ENCODE measurements at regions of chr9 and their contacts with region 1.

Region 1: GRCh38 chr9:76393963-76394679 is at the start of gene RFK:
- H3K4me3 ChIP-seq: peak within 1 kb of the TSS; percentile 88
- H3K27ac ChIP-seq: peak within 1 kb of the TSS; percentile 98
- H3K4me1 ChIP-seq: no peaks in the 10 kb centered on the region
- CTCF ChIP-seq: peak; percentile 87

Region 2: GRCh38 chr9:76269818-76270217 is 124.3 kb before region 1 on chr9:
- CTCF ChIA-PET with region 1: no interaction called
- POLR2A ChIA-PET with region 1: no interaction called
- H3K4me3 ChIP-seq: no peak overlapping the region
- H3K27ac ChIP-seq: no peak overlapping the region
- H3K4me1 ChIP-seq: peaks cover 19% of the 10 kb centered on the region
- CTCF ChIP-seq: no peak

Region 3: DNA sequence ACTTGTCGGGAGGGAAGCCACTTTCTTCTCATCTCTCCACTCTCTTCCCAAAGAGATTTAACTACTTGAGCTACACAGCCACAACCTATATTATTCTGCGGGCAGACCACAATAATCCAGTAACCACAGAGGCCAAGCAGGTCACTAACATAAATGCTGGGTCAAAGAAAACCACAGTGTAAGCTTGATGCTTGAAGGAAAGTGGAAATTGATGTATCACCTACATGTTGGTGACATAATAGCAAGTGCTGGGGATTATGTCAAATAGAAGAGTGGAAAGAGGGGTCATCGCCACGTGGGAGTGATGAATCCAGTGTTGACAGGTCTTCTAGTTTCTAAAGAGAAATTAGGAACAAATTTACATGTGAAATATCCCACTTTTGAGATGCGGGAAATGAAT is 40.8 kb before region 1 on chr9:
- CTCF ChIA-PET with region 1: interaction called, 4 read pairs
- POLR2A ChIA-PET with region 1: interaction called, 11 read pairs
- H3K4me3 ChIP-seq: no peak overlapping the region
- H3K27ac ChIP-seq: no peak overlapping the region
- H3K4me1 ChIP-seq: no peaks in the 10 kb centered on the region
- CTCF ChIP-seq: no peak

Region 4: GRCh38 chr9:76369583-76369982 is 24.5 kb before region 1 on chr9:
- CTCF ChIA-PET with region 1: interaction called, 11 read pairs
- POLR2A ChIA-PET with region 1: interaction called, 40 read pairs
- H3K4me3 ChIP-seq: no peak overlapping the region
- H3K27ac ChIP-seq: peak overlapping the region; percentile 59
- H3K4me1 ChIP-seq: peaks cover 28% of the 10 kb centered on the region
- CTCF ChIP-seq: no peak

Region 5: GRCh38 chr9:76419782-76420380 is 25.8 kb after region 1 on chr9:
- CTCF ChIA-PET with region 1: interaction called, 16 read pairs
- POLR2A ChIA-PET with region 1: interaction called, 4 read pairs
- H3K4me3 ChIP-seq: no peak overlapping the region
- H3K27ac ChIP-seq: no peak overlapping the region
- H3K4me1 ChIP-seq: no peaks in the 10 kb centered on the region
- CTCF ChIP-seq: no peak

Region 6: DNA sequence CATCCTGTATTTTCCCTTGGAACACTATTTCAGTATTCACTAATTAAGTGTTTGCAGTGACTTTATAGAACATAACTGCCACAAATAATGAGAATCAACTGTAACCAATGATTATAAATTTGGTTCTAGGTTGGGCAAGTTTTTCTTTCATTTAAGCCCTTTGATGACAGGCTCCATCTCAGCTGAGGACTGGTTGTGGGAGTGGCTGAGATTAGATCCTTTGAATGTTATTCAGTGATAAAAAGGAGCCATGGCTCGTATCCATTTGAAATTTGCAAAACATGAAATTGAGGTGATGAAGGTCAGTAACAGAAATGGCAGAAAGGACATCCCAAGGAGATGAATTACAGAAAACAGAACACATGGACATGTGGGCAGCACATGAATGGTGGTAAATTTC is 232.0 kb after region 1 on chr9:
- CTCF ChIA-PET with region 1: no interaction called
- POLR2A ChIA-PET with region 1: no interaction called
- H3K4me3 ChIP-seq: no peak overlapping the region
- H3K27ac ChIP-seq: no peak overlapping the region
- H3K4me1 ChIP-seq: no peaks in the 10 kb centered on the region
- CTCF ChIP-seq: no peak

Region 7: GRCh38 chr9:76926324-76926731 is 532.2 kb after region 1 on chr9:
- CTCF ChIA-PET with region 1: no interaction called
- POLR2A ChIA-PET with region 1: interaction called, 10 read pairs
- H3K4me3 ChIP-seq: no peak overlapping the region
- H3K27ac ChIP-seq: no peak overlapping the region
- H3K4me1 ChIP-seq: no peaks in the 10 kb centered on the region
- CTCF ChIP-seq: no peak

Measured in HEK293 (cell line).